GM12878 (cell line): ENCODE measurements at regions of chr17 and their contacts with region 1.

Region 1: DNA sequence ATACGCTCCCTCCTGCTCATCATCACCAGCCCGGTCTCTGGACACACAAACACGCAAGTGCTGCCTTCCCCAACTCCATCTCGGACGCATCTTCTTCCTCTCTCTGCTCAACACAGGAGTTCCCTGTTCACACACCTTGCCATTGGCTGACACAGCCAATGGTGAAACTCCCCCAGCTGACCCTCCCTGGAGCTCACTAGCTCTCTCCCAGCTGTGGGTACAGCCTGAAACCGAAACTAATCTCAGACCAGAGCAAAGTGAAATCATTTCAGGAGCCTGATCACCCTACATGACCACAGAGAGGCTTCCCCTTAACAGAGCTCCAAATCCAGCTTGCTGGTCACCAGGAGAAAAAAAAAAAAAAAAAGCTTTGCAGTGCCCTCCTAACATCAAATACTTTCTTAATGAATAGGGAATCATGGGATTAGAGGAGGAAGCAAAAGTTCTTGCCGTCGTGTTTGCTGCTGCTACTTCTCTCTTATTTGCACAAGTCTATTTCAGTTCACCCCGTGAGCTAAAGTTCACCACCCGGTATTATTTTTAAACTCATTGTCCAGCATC is 8.3 kb downstream of the CUEDC1 start:
- DNase-seq: peak; percentile 73
- ATAC-seq: peak; percentile 90
- H3K4me3 ChIP-seq: peak overlapping the region; percentile 28; the same call in 1 of the 2 replicates
- H3K27ac ChIP-seq: no peak overlapping the region
- H3K4me1 ChIP-seq: peaks cover 54% of the 10 kb centered on the region
- H3K27me3 ChIP-seq: no peaks in the 10 kb centered on the region
- CTCF ChIP-seq: no peak
- EP300 ChIP-seq: no peak
- POLR2A ChIP-seq: no peak
- RAD21 ChIP-seq: no peak

Region 2: DNA sequence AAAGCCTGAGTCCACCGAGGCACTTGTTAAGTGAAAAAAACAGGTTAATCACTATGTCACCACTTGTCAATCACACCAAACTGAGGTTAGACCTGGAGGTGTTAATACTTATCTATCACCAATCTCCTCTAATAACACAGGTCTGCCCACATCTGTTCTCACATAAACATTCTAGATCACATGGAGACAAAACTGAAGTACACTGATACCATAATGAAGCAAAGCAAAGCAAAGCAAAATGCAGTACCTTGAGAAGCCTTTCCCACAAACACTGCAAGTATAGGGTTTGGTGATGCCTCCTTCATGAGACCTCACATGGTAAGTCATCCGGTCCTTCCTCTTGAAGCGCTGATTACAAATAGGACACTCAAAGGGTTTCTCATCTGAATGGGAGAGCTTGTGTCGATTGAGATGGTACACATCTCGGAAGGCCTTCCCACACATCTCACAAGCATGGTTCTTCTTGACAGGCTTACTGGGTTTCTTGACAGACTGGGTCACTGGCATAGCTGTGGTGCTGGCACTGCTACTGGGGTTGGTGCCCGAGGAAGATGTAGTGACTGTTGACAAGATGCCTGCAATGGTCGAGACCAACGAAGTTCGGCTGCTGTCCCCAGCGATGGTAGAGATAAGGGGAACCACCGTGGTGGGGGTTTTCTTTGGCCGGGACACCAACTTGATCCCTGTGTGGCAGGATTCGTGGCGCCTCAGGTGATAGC is 35.7 kb after region 1 on chr17:
- CTCF ChIA-PET with region 1: interaction called, 17 read pairs
- POLR2A ChIA-PET with region 1: interaction called, 7 read pairs
- RAD21 ChIA-PET with region 1: interaction called, 55 read pairs
- SMC1A ChIA-PET with region 1: interaction called, 114 read pairs
- in situ Hi-C with region 1: no loop called
- intact Hi-C with region 1: loop called (anchors 5 kb)
- DNase-seq: no peak
- ATAC-seq: peak; percentile 13
- H3K4me3 ChIP-seq: 0 out of 2 replicates have a peak overlapping the region, but pooled peaks have one; percentile 5
- H3K27ac ChIP-seq: no peak overlapping the region
- H3K4me1 ChIP-seq: no peaks in the 10 kb centered on the region
- H3K27me3 ChIP-seq: no peaks in the 10 kb centered on the region
- CTCF ChIP-seq: no peak
- EP300 ChIP-seq: no peak
- POLR2A ChIP-seq: no peak
- RAD21 ChIP-seq: no peak